Sigmoid colon (tissue), 7 donors: ENCODE measurements at regions of chr12 and their contacts with region 1.

Region 1: DNA sequence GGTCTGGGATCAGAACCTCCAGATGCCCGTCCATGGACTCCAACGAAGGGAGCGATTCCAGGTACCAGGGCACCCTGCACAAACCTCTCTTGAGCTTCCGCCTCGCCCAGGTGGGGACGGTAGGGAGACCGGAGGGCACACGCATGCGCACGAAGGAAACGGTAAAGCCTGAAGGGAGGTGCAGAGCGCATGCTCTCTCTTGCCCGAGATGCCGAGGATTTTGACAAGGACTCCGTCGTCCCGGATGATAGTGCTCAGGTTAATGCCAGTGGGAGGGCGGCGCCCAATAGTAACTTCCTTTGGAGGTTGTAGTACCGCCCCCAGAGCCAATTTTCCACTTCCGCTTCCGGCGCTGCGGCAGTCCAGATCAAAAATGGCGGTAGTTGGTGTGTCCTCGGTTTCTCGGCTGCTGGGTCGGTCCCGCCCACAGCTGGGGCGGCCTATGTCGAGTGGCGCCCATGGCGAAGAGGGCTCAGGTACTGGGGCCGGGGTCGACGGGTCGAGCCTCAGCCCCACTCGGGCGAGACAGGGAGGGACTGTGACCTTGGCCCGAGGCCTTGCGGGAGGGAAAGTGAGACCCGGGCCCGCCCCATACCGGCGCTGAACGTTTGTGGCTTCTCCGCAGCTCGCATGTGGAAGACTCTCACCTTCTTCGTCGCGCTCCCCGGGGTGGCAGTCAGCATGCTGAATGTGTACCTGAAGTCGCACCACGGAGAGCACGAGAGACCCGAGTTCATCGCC is at the start of gene COX6A1:
- DNase-seq: peak; percentile 98
- H3K4me3 ChIP-seq: peak within 1 kb of the TSS; percentile 68 to 87 (median 74)
- H3K27ac ChIP-seq: peak within 1 kb of the TSS; percentile 82 to 92 (median 86)
- H3K4me1 ChIP-seq: peaks cover 0 to 26% (median 19%) of the 10 kb centered on the region in 4 donors
- H3K27me3 ChIP-seq: no peaks in the 10 kb centered on the region
- CTCF ChIP-seq: no peak
- EP300 ChIP-seq: no peak
- POLR2A ChIP-seq: peak; percentile 41 to 47
- total RNA-seq, gene COX6A1: 432 to 759 (median 620) TPM

Region 2: GRCh38 chr12:120469450-120470149 is 31.7 kb after region 1 on chr12 and contains the start of gene SRSF9:
- intact Hi-C with region 1: loop called (anchors 2 kb)
- DNase-seq: peak; percentile 98
- H3K4me3 ChIP-seq: peak within 1 kb of the TSS; percentile 85 to 94 (median 92)
- H3K27ac ChIP-seq: peak within 1 kb of the TSS; percentile 93 to 96 (median 94)
- H3K4me1 ChIP-seq: peaks cover 0 to 40% (median 23%) of the 10 kb centered on the region in 4 donors
- H3K27me3 ChIP-seq: no peaks in the 10 kb centered on the region
- CTCF ChIP-seq: peak; percentile 71 to 87 (median 81)
- EP300 ChIP-seq: no peak
- POLR2A ChIP-seq: peak in 1 of 2 donors; percentile 43
- total RNA-seq, gene SRSF9: 41.4 to 55.1 (median 45.2) TPM

Region 3: GRCh38 chr12:120534203-120534702 is 96.3 kb after region 1 on chr12 and contains the start of gene RNF10:
- intact Hi-C with region 1: loop called (anchors 10 kb)
- DNase-seq: peak; percentile 87
- H3K4me3 ChIP-seq: peak within 1 kb of the TSS; percentile 69 to 98 (median 90)
- H3K27ac ChIP-seq: peak within 1 kb of the TSS; percentile 93 to 99 (median 96)
- H3K4me1 ChIP-seq: peaks cover 0 to 55% (median 45%) of the 10 kb centered on the region in 4 donors
- H3K27me3 ChIP-seq: no peaks in the 10 kb centered on the region
- CTCF ChIP-seq: no peak
- EP300 ChIP-seq: no peak
- POLR2A ChIP-seq: peak; percentile 97 to 98
- total RNA-seq, gene RNF10: 106 to 165 (median 110) TPM